ENCODE measurements at regions of chr2 and their contacts with region 1.

Region 1: DNA sequence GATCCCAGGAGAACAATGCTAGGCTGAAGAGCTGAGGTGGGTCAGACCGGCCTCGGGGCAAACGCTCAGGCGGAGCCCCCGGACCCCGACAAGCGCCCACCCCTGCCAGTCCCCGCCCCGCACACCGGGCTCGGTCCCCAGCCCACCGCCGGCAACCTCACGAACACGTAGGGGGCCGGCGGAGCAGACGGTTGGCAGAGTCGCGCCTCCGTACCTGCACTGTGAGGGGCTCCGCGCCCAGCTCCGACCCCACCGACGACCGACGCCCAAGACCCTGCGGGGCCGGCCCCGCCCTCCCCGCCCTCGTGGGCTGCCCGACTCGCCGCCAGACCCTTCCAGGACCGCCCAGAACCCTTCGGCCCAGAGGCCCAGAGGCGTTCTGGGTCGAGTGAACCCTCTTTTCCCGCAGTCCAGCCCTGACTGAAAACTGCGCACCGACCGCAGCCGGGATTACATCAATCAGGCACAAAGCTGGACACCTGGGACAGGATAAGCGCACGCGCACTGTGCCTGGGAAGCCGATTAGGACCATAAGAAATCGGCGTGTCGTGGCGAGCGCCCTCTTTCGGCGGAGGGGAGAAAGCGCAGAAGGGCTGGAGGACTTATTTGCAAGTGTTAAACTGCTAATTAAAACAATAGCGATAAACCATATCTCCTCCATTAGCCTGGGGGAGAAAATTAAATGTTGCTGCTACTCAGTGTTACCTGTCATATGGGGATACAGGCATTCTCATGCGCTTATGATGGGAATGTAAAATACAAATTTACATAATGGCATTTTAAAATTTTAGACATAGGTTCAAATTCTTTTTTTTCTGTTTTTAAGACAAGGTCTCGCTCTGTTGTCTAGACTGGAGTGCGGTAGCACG is 11.7 kb upstream of the DCTN1 start:
- DNase-seq: peak; percentile 88
- H3K4me3 Mint-ChIP-seq: peak overlapping the region; percentile 43
- H3K27ac Mint-ChIP-seq: peak overlapping the region; percentile 98
- H3K4me1 Mint-ChIP-seq: no peaks in the 10 kb centered on the region
- H3K27me3 Mint-ChIP-seq: peaks cover 10% of the 10 kb centered on the region

Region 2: DNA sequence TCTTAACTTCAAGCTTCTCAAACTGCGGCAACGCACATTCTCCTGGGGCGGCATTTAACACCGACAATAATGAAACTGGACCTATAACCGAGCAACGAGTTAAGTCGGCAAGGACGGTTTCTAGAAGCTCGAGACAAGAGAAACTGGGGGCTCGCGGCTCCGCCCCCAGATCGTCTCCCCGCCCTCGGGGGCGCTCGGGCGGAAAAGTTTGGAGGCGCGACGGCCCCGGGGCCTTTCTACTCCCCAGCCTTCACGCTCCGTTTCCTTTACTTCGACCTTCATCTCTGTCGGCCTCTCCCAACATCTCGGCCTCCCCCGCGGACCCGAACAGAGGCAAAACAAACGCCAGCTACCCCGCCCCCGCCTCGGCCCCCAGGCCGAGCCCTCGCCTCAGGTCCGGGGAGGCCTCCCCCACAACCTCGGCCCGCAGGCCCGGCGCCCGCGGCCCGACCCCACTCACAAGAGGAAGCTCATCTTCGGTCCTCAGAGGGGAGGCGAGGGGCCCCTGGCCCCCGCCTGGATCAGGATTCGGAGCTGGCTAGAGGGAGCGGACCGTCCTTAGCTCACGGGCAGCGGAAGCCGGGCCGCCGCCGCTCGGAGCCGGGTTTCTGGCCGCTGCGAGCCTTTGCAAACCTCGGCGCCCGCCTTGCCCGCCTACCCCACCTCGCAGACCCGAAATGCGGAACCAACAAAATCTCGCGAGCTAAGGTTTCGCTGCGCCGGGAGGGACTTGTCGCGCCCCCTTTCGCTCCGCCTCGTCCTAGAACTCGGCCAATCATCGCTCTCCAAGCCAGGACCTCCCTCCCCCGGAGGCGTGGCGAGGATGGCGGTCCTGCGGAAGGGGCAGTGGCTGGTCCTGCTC is 213.4 kb before region 1 on chr2 and contains the start of gene MOB1A:
- intact Hi-C with region 1: loop called (anchors 1 kb)
- DNase-seq: peak; percentile 99
- H3K4me3 Mint-ChIP-seq: peak within 1 kb of the TSS; percentile 88
- H3K27ac Mint-ChIP-seq: peak within 1 kb of the TSS; percentile 85
- H3K4me1 Mint-ChIP-seq: peaks cover 40% of the 10 kb centered on the region
- H3K27me3 Mint-ChIP-seq: no peaks in the 10 kb centered on the region
- total RNA-seq, gene MOB1A: 207 and 221 TPM in 2 replicates

Region 3: DNA sequence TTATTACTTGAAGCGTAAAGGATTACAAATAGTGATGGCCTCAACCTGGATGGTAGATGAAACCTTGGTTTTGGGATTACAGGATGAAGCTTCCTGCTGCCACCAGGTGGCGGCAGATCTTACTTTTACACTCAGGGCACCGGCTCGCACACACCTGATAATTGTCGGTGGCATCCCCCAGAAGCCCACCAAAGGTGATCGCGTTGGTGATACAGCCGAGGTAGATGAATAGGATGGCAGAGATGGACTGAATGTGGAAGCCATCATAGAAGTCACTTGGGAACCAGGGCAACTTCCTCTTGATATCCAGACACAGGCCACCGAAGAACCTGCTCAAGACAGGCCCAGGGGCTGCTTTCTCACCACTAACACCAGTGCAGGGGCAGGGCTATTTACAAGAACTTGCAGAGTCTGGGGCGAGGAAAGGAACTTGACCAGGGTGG is 141.6 kb before region 1 on chr2:
- intact Hi-C with region 1: loop called (anchors 1 kb)
- DNase-seq: peak; percentile 23
- H3K4me3 Mint-ChIP-seq: no peak overlapping the region
- H3K27ac Mint-ChIP-seq: no peak overlapping the region
- H3K4me1 Mint-ChIP-seq: no peaks in the 10 kb centered on the region
- H3K27me3 Mint-ChIP-seq: peaks cover 7% of the 10 kb centered on the region

Region 4: DNA sequence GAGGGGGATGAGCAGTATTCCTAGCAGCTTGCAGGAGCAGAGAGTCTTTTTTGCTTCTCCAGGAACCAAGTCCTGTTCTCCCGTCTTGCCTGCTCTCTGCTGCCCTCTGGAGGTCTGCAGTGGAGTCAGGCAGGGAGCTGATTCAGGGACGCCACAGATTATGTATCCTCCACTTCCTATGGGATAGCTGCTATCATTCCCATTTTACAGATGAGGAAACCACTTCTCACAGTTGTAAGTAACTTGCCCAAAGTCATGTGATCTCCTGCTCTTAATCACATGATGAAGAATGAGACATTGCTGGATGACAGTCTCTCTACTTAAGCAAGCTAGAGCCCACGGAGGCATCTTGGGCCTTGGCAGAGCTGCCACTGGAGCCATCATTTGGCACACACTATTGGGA is 56.9 kb before region 1 on chr2:
- intact Hi-C with region 1: loop called (anchors 2 kb)
- DNase-seq: peak; percentile 57
- H3K4me3 Mint-ChIP-seq: no peak overlapping the region
- H3K27ac Mint-ChIP-seq: no peak overlapping the region
- H3K4me1 Mint-ChIP-seq: no peaks in the 10 kb centered on the region
- H3K27me3 Mint-ChIP-seq: peaks cover 2% of the 10 kb centered on the region

Measured in activated T-helper 1 cell treated with anti-CD3 and anti-CD28 coated beads, Interleukin-12 subunit alpha, Interleukin-12 subunit beta, Interleukin-2, Interleukin-4 antibody, amounts not matched to agents 30 ng/mL and 10 ng/mL and 1 ng/mL, durations not matched to agents 14 hours and 24 hours and 36 hours (primary cell).